ENCODE measurements at regions of chr20 and their contacts with region 1.

Region 1: DNA sequence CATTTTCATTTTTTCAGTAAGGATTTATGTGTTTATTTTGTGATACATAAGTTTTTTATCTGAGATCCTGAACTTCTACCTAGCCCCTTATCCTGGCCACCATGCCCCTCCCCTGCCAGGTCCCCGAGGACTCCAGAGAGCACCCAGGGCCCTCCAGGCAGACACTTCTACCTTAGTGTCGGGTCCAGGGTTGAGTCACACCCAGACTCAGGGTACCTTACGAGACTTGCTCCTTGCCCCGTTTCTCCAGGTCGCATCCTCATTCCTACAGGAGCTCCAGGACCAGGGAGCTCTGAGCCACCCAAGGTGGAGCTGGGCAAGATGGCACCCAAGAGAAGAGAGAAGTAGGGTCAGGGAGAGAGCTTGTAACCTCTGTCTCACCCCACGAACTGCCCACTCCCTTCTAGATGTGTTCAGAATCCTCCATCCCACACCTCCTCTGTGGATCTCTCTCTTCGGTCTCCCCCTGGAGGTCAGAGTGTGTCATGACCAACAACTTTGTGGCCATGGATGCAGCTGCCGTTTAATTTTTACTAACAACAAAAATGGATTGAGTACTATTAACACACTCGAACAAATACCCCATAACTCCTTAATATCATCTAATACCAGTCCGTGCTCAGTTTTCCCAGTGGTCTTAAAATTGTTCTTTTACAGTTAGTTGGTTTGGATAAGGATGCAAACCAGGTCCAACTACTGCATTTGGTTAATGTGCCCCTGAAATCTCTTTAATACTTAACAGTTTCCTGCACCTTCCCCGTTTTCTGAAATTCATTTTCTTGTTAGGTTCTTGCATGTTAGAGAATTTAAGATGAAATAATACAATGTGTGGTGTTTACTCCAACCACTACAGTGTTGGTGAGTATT is 130.6 kb upstream of the INSM1 start:
- DNase-seq: no peak
- ATAC-seq: peak; percentile 72 to 81 (median 78)
- H3K4me3 ChIP-seq: no peak overlapping the region
- H3K27ac ChIP-seq: no peak overlapping the region
- H3K4me1 ChIP-seq: no peaks in the 10 kb centered on the region
- H3K27me3 ChIP-seq: no peaks in the 10 kb centered on the region
- CTCF ChIP-seq: peak; percentile 51 to 68 (median 64)
- POLR2A ChIP-seq: no peak

Region 2: DNA sequence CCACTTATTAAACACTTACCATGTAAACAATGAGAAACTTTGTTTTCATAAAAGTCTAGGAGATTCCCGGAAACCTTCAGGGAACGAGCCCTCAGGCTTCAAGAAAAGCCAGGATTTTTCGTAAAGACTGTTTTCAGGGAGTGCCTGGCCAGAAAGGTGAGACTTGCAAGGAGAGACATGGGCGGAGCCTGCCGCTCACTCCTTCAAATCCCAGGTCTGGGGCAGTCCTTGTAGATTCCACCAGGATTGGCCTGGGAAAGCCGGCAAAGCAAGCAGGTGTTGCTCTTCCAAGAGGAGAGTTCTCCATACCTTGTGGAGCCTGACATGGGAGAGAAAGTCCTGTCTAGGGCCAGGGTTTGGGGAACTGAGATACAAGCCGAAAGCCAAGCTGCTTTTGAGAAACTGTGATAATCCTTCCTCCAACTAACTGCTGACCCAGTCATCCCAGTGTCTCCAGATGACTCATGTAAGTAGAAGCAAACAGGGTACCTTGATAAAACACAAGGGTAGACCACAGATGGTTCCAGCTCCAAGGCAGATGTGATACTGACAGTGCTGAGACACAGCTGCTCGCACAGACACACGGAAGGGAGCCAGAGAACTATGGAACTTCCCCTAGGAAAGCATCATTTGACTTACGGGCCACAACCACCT is 289.6 kb before region 1 on chr20:
- intact Hi-C with region 1: loop called in 1 of 2 experiments (anchors 10 kb)
- DNase-seq: no peak
- ATAC-seq: peak in 1 of 4 donors; percentile 14
- H3K4me3 ChIP-seq: no peak overlapping the region
- H3K27ac ChIP-seq: no peak overlapping the region
- H3K4me1 ChIP-seq: peaks cover 0 to 16% (median 5%) of the 10 kb centered on the region in 4 donors
- H3K27me3 ChIP-seq: no peaks in the 10 kb centered on the region
- CTCF ChIP-seq: no peak
- POLR2A ChIP-seq: no peak

Region 3: GRCh38 chr20:20083807-20084206 is 153.5 kb before region 1 on chr20:
- intact Hi-C with region 1: loop called in 1 of 2 experiments (anchors 10 kb)
- DNase-seq: no peak
- ATAC-seq: peak; percentile 55 to 77 (median 70)
- H3K4me3 ChIP-seq: no peak overlapping the region
- H3K27ac ChIP-seq: no peak overlapping the region
- H3K4me1 ChIP-seq: no peaks in the 10 kb centered on the region
- H3K27me3 ChIP-seq: no peaks in the 10 kb centered on the region
- CTCF ChIP-seq: peak; percentile 45 to 58 (median 48)
- POLR2A ChIP-seq: no peak

Region 4: DNA sequence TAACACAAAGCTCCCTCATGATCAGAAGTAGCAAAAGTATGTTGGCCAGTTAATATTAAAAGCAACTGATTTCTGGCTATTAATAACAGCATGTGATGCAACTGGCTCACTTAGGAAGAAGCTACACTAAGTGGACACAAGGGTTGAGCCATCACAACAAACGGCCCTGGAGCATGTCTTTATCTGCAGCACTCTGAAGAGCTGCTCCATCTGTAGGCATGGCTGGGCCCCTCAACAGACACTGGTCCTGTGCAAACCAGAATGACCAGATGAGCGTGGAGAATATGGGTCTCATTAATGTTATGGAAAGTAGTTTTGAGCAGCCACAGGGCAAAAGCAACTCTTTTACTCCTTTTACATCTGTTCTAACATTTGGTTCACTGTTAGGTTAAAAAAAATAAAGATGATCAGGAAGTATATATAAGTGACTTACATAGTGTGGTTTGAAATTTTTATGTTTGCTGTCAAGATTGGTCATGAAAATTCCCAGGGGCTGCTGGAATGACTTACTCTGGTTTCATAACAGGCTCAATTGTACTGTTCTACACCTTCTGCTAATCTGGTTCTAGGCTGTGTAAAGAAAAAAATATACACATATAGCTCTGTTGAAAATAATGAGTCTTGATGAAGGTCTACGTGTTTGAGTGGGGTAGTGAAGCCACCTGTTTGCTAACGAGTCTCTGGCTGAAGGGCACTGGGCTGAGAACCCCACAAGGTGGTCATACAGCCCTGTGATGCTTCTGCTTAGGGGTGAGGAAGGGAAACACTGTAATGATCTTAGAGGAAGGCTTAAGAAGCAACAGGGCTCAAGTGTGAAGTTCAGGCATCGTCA is 188.7 kb after region 1 on chr20:
- intact Hi-C with region 1: no loop called
- DNase-seq: no peak
- ATAC-seq: no peak
- H3K4me3 ChIP-seq: no peak overlapping the region
- H3K27ac ChIP-seq: no peak overlapping the region
- H3K4me1 ChIP-seq: no peaks in the 10 kb centered on the region
- H3K27me3 ChIP-seq: no peaks in the 10 kb centered on the region
- CTCF ChIP-seq: no peak
- POLR2A ChIP-seq: no peak